Activated CD4-positive, alpha-beta T cell treated with anti-CD3 and anti-CD28 coated beads, Interleukin-2, amount 10 ng/mL, durations not matched to agents 7 days and 5 days (primary cell): ENCODE measurements at regions of chr11 and their contacts with region 1.

Region 1: GRCh38 chr11:72026090-72026489 is 27.4 kb downstream of the IL18BP start:
- DNase-seq: no peak
- H3K4me3 Mint-ChIP-seq: no peak overlapping the region
- H3K27ac Mint-ChIP-seq: no peak overlapping the region
- H3K4me1 Mint-ChIP-seq: peaks cover 22% of the 10 kb centered on the region
- H3K27me3 Mint-ChIP-seq: no peaks in the 10 kb centered on the region

Region 2: DNA sequence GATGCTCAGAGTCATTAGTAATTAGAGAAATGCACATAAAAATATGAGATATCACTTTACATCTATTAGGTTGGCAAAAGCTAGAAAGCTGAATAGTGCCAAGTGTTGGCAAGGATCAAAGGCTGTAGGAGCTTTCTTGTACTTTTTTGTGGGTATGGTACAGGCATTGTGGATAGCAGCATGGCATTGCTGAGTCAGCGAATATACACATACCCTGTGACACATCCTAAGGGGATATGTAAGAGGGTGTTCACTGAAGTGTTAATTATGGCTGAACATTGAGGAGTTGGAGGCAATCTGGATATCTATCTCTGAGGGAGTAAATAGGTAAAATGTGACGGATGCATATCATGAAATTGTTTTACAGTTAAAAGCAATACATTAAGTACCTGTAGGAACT is 54.4 kb before region 1 on chr11:
- CTCF ChIA-PET with region 1: no interaction called
- POLR2A ChIA-PET with region 1: no interaction called
- DNase-seq: no peak
- H3K4me3 Mint-ChIP-seq: no peak overlapping the region
- H3K27ac Mint-ChIP-seq: no peak overlapping the region
- H3K4me1 Mint-ChIP-seq: no peaks in the 10 kb centered on the region
- H3K27me3 Mint-ChIP-seq: no peaks in the 10 kb centered on the region

Region 3: GRCh38 chr11:72015511-72016171 is 10.4 kb before region 1 on chr11:
- CTCF ChIA-PET with region 1: interaction called, 29 read pairs
- POLR2A ChIA-PET with region 1: interaction called, 3 read pairs
- DNase-seq: no peak
- H3K4me3 Mint-ChIP-seq: no peak overlapping the region
- H3K27ac Mint-ChIP-seq: peak overlapping the region; percentile 69
- H3K4me1 Mint-ChIP-seq: no peaks in the 10 kb centered on the region
- H3K27me3 Mint-ChIP-seq: no peaks in the 10 kb centered on the region

Region 4: DNA sequence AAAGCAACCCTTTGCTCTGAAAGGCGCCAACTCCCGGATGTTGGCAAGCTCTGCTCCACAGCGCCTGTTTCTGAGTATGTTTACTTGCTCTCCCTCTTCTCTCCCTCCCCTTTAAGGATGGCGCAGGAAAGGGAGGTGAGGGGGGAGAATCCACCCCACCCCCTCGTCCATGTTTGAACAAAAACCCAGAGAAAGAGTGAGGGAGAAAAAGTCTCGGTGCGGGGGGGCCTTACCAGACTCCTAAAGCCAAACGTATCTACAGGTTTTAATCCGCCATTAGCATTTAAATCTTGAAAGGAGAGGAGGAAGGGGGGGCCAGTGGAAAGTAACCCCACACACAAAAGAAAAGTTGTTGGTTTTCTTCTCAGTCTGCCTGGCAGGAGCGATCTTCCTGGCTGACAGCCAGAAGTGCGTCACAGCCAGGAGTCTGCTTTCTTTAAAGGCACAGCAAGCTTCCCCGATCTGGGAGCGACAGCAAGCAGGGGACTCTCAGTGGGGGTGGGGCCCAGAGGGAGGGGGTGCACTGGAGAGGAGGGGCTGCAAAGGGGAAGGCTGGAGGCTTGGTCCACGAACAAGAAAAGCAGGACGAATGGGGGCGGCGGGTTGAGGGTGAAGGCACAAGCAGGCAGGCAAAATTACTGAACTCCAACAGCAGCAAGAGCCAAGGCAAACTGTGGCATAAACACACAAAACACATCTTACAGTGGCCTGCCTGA is 14.8 kb after region 1 on chr11:
- CTCF ChIA-PET with region 1: interaction called, 18 read pairs
- POLR2A ChIA-PET with region 1: interaction called, 3 read pairs
- DNase-seq: peak; percentile 79
- H3K4me3 Mint-ChIP-seq: no peak overlapping the region
- H3K27ac Mint-ChIP-seq: no peak overlapping the region
- H3K4me1 Mint-ChIP-seq: peaks cover 39% of the 10 kb centered on the region
- H3K27me3 Mint-ChIP-seq: no peaks in the 10 kb centered on the region

Region 5: DNA sequence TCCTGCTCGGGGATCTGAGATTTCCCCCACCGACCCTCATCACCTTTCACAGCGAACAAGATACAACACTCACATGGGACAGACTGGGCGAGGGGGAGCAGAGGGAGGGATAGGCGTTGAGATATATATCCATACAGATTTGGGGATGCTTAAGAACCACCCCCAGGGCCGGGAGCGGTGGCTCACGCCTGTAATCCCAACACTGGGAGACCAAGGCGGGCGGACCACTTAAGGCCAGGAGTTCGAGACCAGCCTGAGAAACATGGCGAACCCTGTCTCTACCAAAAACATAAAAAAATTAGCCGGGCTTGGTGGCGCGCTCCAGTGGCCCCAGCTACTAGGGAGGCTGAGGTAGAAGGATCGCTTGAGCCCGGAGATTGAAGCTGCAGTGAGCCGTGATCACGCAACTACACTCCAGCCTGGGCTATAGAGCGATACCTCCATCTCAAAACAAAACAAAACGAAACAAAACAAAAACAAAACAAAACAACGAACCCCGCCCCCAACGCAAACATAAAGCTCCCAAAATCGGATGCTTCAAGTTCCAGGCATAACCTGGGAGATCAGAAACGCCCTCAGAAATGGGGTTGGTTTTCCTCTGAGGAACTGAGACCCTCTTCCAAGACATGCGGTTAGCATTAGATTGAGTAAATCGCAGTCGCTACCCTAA is 55.0 kb after region 1 on chr11:
- CTCF ChIA-PET with region 1: interaction called, 16 read pairs
- POLR2A ChIA-PET with region 1: no interaction called
- DNase-seq: no peak
- H3K4me3 Mint-ChIP-seq: peak overlapping the region; percentile 90
- H3K27ac Mint-ChIP-seq: peak overlapping the region; percentile 96
- H3K4me1 Mint-ChIP-seq: peaks cover 53% of the 10 kb centered on the region
- H3K27me3 Mint-ChIP-seq: no peaks in the 10 kb centered on the region

Region 6: GRCh38 chr11:72091005-72091691 is 65.1 kb after region 1 on chr11:
- CTCF ChIA-PET with region 1: interaction called, 27 read pairs
- POLR2A ChIA-PET with region 1: no interaction called
- DNase-seq: peak; percentile 76
- H3K4me3 Mint-ChIP-seq: no peak overlapping the region
- H3K27ac Mint-ChIP-seq: no peak overlapping the region
- H3K4me1 Mint-ChIP-seq: peaks cover 16% of the 10 kb centered on the region
- H3K27me3 Mint-ChIP-seq: no peaks in the 10 kb centered on the region